HCT116 (cell line): ENCODE measurements at regions of chr17 and their contacts with region 1.

Region 1: GRCh38 chr17:68035523-68036303 is at the start of gene KPNA2:
- DNase-seq: peak; percentile 99
- ATAC-seq: peak; percentile 87
- H3K4me3 ChIP-seq: peak within 1 kb of the TSS; percentile 86 to 92
- H3K27ac ChIP-seq: peak within 1 kb of the TSS; percentile 89
- H3K4me1 ChIP-seq: peaks cover 17 to 22% of the 10 kb centered on the region in 2 experiments
- H3K27me3 ChIP-seq: no peaks in the 10 kb centered on the region
- CTCF ChIP-seq: no peak
- POLR2A ChIP-seq: peak; percentile 92
- RAD21 ChIP-seq: no peak
- total RNA-seq, gene KPNA2: 330 TPM

Region 2: GRCh38 chr17:67993596-67994361 is 41.9 kb before region 1 on chr17:
- CTCF ChIA-PET with region 1: no interaction called
- POLR2A ChIA-PET with region 1: no interaction called
- RAD21 ChIA-PET with region 1: no interaction called
- intact Hi-C with region 1: no loop called
- DNase-seq: peak; percentile 81
- ATAC-seq: peak; percentile 82
- H3K4me3 ChIP-seq: peak overlapping the region; percentile 74 to 98
- H3K27ac ChIP-seq: peak overlapping the region; percentile 99
- H3K4me1 ChIP-seq: peaks cover 9 to 27% of the 10 kb centered on the region in 2 experiments
- H3K27me3 ChIP-seq: no peaks in the 10 kb centered on the region
- CTCF ChIP-seq: no peak
- POLR2A ChIP-seq: peak; percentile 70
- RAD21 ChIP-seq: no peak

Region 3: GRCh38 chr17:68019675-68020408 is 15.9 kb before region 1 on chr17:
- CTCF ChIA-PET with region 1: interaction called, 6 read pairs
- POLR2A ChIA-PET with region 1: interaction called, 6 read pairs
- RAD21 ChIA-PET with region 1: no interaction called
- intact Hi-C with region 1: loop called (anchors 1 kb)
- DNase-seq: peak; percentile 98
- ATAC-seq: peak; percentile 91
- H3K4me3 ChIP-seq: peak overlapping the region; percentile 50 to 56
- H3K27ac ChIP-seq: peak overlapping the region; percentile 65
- H3K4me1 ChIP-seq: peaks cover 18 to 36% of the 10 kb centered on the region in 2 experiments
- H3K27me3 ChIP-seq: no peaks in the 10 kb centered on the region
- CTCF ChIP-seq: peak in 2 of 3 experiments; percentile 29 to 42; a peak in 2 of 6 replicates
- POLR2A ChIP-seq: peak; percentile 95
- RAD21 ChIP-seq: no peak

Region 4: DNA sequence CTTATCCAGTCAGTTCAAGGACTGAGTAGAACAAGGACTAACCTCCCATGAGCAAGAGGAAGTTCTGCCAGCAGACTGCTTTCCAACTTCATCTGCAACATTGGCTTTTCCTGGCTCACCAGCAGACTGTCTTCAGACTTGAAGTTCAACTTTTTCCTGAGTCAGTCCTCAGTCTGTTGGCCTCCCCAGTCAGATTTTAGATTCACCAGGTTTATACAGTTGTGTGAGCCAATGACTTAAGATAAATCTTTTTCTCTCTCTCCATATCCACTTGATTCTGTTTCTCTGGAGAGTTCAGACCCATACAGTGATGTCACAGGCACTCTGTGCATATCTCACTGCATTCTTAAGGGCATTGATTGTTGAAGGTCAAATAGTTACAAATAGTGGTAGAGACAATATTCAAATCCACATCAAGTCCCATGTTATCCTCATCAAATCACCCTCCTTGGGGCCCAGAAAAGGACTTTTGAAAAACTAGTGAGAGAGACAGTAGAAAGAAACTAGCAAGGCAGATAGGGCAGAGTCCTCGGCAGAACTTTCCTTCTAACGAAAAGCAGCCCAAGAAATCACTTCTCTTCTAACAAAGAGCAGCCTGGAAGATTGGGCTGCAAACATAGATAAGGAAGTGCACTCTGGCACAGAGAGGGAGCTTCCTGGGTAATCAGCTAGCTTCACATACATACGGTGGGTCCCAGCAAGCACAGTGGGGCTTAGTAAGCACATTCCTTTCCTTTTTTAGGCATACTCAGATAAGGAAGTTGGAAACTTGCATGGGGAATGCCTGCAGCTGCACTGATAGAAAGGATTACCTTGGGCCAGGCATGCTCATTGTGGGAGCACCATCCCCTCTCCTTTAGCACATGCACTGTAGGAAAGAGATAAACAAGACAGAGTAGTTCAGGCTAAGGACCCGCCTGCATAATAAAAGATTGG is 697.8 kb after region 1 on chr17:
- CTCF ChIA-PET with region 1: no interaction called
- POLR2A ChIA-PET with region 1: no interaction called
- RAD21 ChIA-PET with region 1: no interaction called
- intact Hi-C with region 1: no loop called
- DNase-seq: no peak
- ATAC-seq: 0 out of 2 replicates have a peak, but pooled peaks have one; percentile 30
- H3K4me3 ChIP-seq: no peak overlapping the region
- H3K27ac ChIP-seq: no peak overlapping the region
- H3K4me1 ChIP-seq: peaks cover 0 to 15% of the 10 kb centered on the region in 2 experiments; a peak in 1 of 4 replicates
- H3K27me3 ChIP-seq: no peaks in the 10 kb centered on the region
- CTCF ChIP-seq: no peak
- POLR2A ChIP-seq: no peak
- RAD21 ChIP-seq: no peak